Endothelial cell of umbilical vein (primary cell): ENCODE measurements at regions of chr1 and their contacts with region 1.

Region 1: GRCh38 chr1:239951511-239952140 is 140.1 kb upstream of the FMN2 start:
- DNase-seq: peak; percentile 51
- H3K4me3 ChIP-seq: no peak overlapping the region
- H3K27ac ChIP-seq: no peak overlapping the region
- H3K4me1 ChIP-seq: no peaks in the 10 kb centered on the region
- H3K27me3 ChIP-seq: no peaks in the 10 kb centered on the region
- CTCF ChIP-seq: peak; percentile 44 to 49
- POLR2A ChIP-seq: no peak

Region 2: GRCh38 chr1:239976130-239976968 is 24.7 kb after region 1 on chr1:
- CTCF ChIA-PET with region 1: interaction called, 9 read pairs
- POLR2A ChIA-PET with region 1: no interaction called
- dilution Hi-C with region 1: no loop called
- intact Hi-C with region 1: loop called (anchors 1 kb)
- DNase-seq: peak; percentile 38
- H3K4me3 ChIP-seq: no peak overlapping the region
- H3K27ac ChIP-seq: no peak overlapping the region
- H3K4me1 ChIP-seq: no peaks in the 10 kb centered on the region
- H3K27me3 ChIP-seq: no peaks in the 10 kb centered on the region
- CTCF ChIP-seq: peak; percentile 82 to 88
- POLR2A ChIP-seq: no peak

Region 3: DNA sequence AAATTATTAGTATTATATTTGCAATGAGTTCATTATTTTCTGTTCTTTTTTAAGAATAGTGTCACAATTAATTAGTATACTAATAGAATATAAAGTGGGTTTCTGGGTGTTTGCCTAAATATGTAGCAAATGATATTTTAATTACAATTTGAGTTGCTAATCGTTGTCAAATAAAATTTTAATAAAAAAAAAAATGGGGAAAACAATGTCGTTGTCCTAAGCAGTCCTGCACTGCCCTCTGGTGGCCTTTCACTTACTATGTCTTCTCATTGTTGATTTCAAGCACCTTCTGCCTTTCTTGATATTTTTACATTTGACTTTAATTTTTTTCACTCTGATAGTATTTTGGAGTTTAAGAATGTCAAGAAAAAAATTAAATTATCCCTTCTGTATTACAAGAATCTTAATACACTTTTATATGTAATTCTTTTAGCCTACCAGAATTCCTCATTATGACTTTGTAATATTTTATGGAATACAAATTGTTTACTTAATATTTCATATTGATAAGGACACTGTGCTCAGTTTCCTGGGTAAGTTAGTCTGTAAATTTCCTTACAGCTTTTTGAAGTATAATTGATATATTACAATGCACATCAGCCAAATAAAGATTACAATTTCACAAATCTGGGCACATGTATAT is 35.6 kb after region 1 on chr1:
- CTCF ChIA-PET with region 1: interaction called, 9 read pairs
- POLR2A ChIA-PET with region 1: no interaction called
- dilution Hi-C with region 1: no loop called
- intact Hi-C with region 1: loop called (anchors 1 kb)
- DNase-seq: peak; percentile 24
- H3K4me3 ChIP-seq: no peak overlapping the region
- H3K27ac ChIP-seq: no peak overlapping the region
- H3K4me1 ChIP-seq: no peaks in the 10 kb centered on the region
- H3K27me3 ChIP-seq: no peaks in the 10 kb centered on the region
- CTCF ChIP-seq: peak; percentile 49 to 54
- POLR2A ChIP-seq: no peak

Region 4: GRCh38 chr1:240004086-240004749 is 52.6 kb after region 1 on chr1:
- CTCF ChIA-PET with region 1: interaction called, 16 read pairs
- POLR2A ChIA-PET with region 1: no interaction called
- dilution Hi-C with region 1: no loop called
- intact Hi-C with region 1: no loop called
- DNase-seq: no peak
- H3K4me3 ChIP-seq: no peak overlapping the region
- H3K27ac ChIP-seq: no peak overlapping the region
- H3K4me1 ChIP-seq: no peaks in the 10 kb centered on the region
- H3K27me3 ChIP-seq: peaks cover 0 to 1% of the 10 kb centered on the region in 2 experiments
- CTCF ChIP-seq: peak; percentile 71 to 72
- POLR2A ChIP-seq: no peak

Region 5: GRCh38 chr1:240056350-240056749 is 104.7 kb after region 1 on chr1:
- CTCF ChIA-PET with region 1: no interaction called
- POLR2A ChIA-PET with region 1: no interaction called
- dilution Hi-C with region 1: no loop called
- intact Hi-C with region 1: no loop called
- DNase-seq: no peak
- H3K4me3 ChIP-seq: no peak overlapping the region
- H3K27ac ChIP-seq: no peak overlapping the region
- H3K4me1 ChIP-seq: no peaks in the 10 kb centered on the region
- H3K27me3 ChIP-seq: no peaks in the 10 kb centered on the region
- CTCF ChIP-seq: no peak
- POLR2A ChIP-seq: no peak

Region 6: GRCh38 chr1:240149484-240150094 is 198.0 kb after region 1 on chr1:
- CTCF ChIA-PET with region 1: interaction called, 3 read pairs
- POLR2A ChIA-PET with region 1: no interaction called
- dilution Hi-C with region 1: no loop called
- intact Hi-C with region 1: loop called (anchors 1 kb)
- DNase-seq: peak; percentile 37
- H3K4me3 ChIP-seq: no peak overlapping the region
- H3K27ac ChIP-seq: no peak overlapping the region
- H3K4me1 ChIP-seq: no peaks in the 10 kb centered on the region
- H3K27me3 ChIP-seq: no peaks in the 10 kb centered on the region
- CTCF ChIP-seq: peak; percentile 41 to 42
- POLR2A ChIP-seq: no peak

Region 7: DNA sequence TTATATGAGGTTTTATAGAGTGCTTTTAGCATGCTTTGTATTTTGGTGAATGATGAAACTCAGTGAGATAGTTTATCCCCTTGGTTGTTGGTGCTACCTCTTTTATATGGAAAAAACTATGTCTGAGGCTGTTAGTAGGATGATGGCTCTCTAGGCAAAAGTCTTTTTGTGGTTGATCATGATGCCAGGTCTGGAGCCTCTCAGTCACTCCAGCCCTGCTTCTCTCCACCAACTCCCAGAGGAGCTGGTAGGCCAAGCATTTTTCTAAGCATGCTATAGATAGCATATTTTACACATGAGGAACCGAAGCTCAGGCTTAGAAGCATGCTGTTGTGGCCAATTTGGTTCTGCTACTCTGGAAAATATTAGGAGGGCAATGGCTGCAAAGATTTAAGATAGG is 222.2 kb after region 1 on chr1:
- CTCF ChIA-PET with region 1: no interaction called
- POLR2A ChIA-PET with region 1: no interaction called
- dilution Hi-C with region 1: no loop called
- intact Hi-C with region 1: no loop called
- DNase-seq: no peak
- H3K4me3 ChIP-seq: no peak overlapping the region
- H3K27ac ChIP-seq: no peak overlapping the region
- H3K4me1 ChIP-seq: no peaks in the 10 kb centered on the region
- H3K27me3 ChIP-seq: no peaks in the 10 kb centered on the region
- CTCF ChIP-seq: no peak
- POLR2A ChIP-seq: no peak